Esophagus muscularis mucosa (tissue), 4 donors: ENCODE measurements at regions of chr16 and their contacts with region 1.

Region 1: GRCh38 chr16:4116337-4117249 is at the start of gene ADCY9:
- DNase-seq: no peak
- H3K4me3 ChIP-seq: peak within 1 kb of the TSS; percentile 82 to 94 (median 86)
- H3K27ac ChIP-seq: peak within 1 kb of the TSS; percentile 82 to 89 (median 87)
- H3K4me1 ChIP-seq: peaks cover 28 to 49% (median 48%) of the 10 kb centered on the region in 4 donors
- H3K27me3 ChIP-seq: no peaks in the 10 kb centered on the region
- CTCF ChIP-seq: no peak
- EP300 ChIP-seq: no peak
- POLR2A ChIP-seq: no peak
- total RNA-seq, gene ADCY9: 35.8 to 72.9 (median 55.7) TPM

Region 2: GRCh38 chr16:3961449-3961849 is 155.1 kb before region 1 on chr16:
- intact Hi-C with region 1: no loop called
- DNase-seq: no peak
- H3K4me3 ChIP-seq: peak overlapping the region; percentile 48 to 61 (median 56)
- H3K27ac ChIP-seq: peak overlapping the region; percentile 68 to 80 (median 71)
- H3K4me1 ChIP-seq: peaks cover 8 to 24% (median 21%) of the 10 kb centered on the region in 4 donors
- H3K27me3 ChIP-seq: no peaks in the 10 kb centered on the region
- CTCF ChIP-seq: no peak
- EP300 ChIP-seq: no peak
- POLR2A ChIP-seq: no peak

Region 3: GRCh38 chr16:3983081-3983520 is 133.5 kb before region 1 on chr16:
- intact Hi-C with region 1: loop called (anchors 5 kb)
- DNase-seq: no peak
- H3K4me3 ChIP-seq: no peak overlapping the region
- H3K27ac ChIP-seq: no peak overlapping the region
- H3K4me1 ChIP-seq: peaks cover 3 to 24% (median 19%) of the 10 kb centered on the region in 4 donors
- H3K27me3 ChIP-seq: no peaks in the 10 kb centered on the region
- CTCF ChIP-seq: peak; percentile 61 to 84 (median 72)
- EP300 ChIP-seq: no peak
- POLR2A ChIP-seq: no peak

Region 4: GRCh38 chr16:4053301-4053845 is 63.2 kb before region 1 on chr16:
- intact Hi-C with region 1: loop called (anchors 10 kb)
- DNase-seq: peak; percentile 94
- H3K4me3 ChIP-seq: peak overlapping the region; percentile 5 to 50 (median 36)
- H3K27ac ChIP-seq: peak overlapping the region; percentile 71 to 86 (median 82)
- H3K4me1 ChIP-seq: peaks cover 23 to 33% (median 31%) of the 10 kb centered on the region in 4 donors
- H3K27me3 ChIP-seq: no peaks in the 10 kb centered on the region
- CTCF ChIP-seq: no peak
- EP300 ChIP-seq: no peak
- POLR2A ChIP-seq: no peak

Region 5: DNA sequence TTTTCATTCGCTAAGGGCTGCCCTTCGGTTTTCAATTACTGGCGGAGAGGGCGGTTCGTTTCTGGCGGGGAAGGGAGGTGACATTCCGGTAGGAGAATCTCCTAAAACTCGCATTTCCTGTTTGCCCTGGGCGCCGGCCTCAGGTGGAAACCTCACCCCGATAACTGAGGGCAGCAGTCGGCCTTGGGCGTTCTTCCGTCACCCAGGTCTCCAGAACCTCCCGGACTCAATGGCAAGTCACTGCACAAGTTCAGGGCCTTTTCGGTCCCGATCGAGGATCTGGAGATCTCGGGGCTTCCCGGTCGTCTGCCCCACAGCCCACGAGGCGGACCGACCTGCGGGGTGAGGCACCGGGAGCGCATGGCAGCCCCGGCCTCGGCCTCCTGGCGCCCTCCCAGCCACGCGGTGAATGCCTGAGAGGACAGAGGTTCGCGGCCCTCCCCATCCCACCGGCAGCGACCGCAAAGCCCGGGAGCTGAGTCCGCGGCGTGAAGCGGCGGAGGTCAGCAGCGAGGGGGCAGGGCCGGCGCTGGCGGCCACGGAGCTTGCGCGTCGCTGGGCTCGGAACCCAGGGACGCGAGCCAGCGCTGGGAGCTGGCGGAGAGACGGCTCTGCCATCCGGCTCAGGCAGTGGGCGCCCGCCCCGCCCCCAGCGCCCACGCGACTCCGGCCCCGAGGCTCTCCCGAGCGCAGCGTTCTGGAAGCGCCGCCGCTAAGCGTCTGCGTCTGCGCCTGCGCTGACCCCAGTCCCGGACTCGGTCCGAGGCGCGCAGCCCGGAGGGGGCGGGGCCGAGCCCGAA is 66.8 kb after region 1 on chr16:
- intact Hi-C with region 1: loop called (anchors 5 kb)
- DNase-seq: peak; percentile 95
- H3K4me3 ChIP-seq: peak overlapping the region; percentile 68 to 87 (median 73)
- H3K27ac ChIP-seq: peak overlapping the region; percentile 96 to 99 (median 98)
- H3K4me1 ChIP-seq: peaks cover 5 to 23% (median 17%) of the 10 kb centered on the region in 4 donors
- H3K27me3 ChIP-seq: no peaks in the 10 kb centered on the region
- CTCF ChIP-seq: peak; percentile 26 to 42 (median 35)
- EP300 ChIP-seq: no peak
- POLR2A ChIP-seq: peak; percentile 53